CD14-positive monocyte (primary cell): ENCODE measurements at regions of chr19 and their contacts with region 1.

Region 1: GRCh38 chr19:2096480-2097329 is at the start of gene IZUMO4:
- DNase-seq: peak; percentile 97 to 98 (median 98)
- H3K4me3 ChIP-seq: peak within 1 kb of the TSS; percentile 49 to 99 (median 95)
- H3K4me3 Mint-ChIP-seq: peak within 1 kb of the TSS; percentile 91 to 99
- H3K27ac ChIP-seq: peak within 1 kb of the TSS; percentile 96 to 98
- H3K27ac Mint-ChIP-seq: peak within 1 kb of the TSS; percentile 100
- H3K4me1 ChIP-seq: peaks cover 42 to 49% of the 10 kb centered on the region in 2 donors
- H3K4me1 Mint-ChIP-seq: peaks cover 40% of the 10 kb centered on the region
- H3K27me3 ChIP-seq: no peaks in the 10 kb centered on the region
- H3K27me3 Mint-ChIP-seq: peaks cover 0 to 4% (median 0%) of the 10 kb centered on the region in 3 donors
- CTCF ChIP-seq: peak; percentile 41
- polyA plus RNA-seq, gene IZUMO4: 0.41 to 17.5 (median 0.80) TPM

Region 2: DNA sequence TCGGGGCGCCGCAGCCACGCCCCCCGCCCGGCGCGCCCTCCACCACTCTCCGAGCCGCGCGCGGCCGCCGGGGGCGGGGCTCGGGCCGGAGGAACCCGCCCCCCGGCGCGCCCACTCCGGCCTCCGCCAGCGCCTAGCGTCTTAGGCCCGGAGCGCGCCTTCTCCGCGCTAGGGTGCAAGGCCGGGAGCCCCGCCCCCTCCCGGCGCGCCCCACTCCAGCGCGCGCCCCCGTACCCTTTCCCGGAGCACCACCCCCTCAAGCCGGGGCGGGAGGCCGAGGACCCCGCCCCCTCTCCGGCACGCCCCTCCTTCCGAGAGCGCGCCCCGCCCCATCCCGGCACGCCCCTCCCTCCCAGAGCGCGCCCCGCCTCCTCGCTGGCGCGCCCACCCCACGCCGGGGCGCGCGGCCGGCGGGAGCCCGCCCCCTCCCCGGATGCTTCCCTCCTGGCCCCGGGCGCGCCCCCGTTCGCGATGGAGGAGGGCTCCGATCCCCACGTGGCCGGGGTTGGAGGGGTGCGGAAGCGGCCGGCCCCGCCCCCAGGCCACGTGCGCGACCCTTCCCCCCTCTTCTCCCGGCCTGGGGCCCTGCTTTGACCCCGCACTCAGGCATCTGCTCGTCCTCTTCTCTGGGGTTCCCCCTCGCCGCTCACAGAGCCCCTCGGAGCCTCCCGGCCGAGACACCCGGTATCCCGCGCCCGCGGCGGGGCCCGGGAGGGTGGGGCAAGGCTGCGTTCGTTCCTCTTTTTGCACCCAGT is 232.8 kb before region 1 on chr19:
- intact Hi-C with region 1: loop called in 1 of 2 experiments (anchors 2 kb)
- DNase-seq: peak; percentile 84 to 92 (median 90)
- H3K4me3 ChIP-seq: peak overlapping the region; percentile 67 to 93 (median 93)
- H3K4me3 Mint-ChIP-seq: peak overlapping the region; percentile 80 to 81
- H3K27ac ChIP-seq: peak overlapping the region; percentile 92 to 97
- H3K27ac Mint-ChIP-seq: peak overlapping the region; percentile 54 to 95 (median 92)
- H3K4me1 ChIP-seq: peaks cover 45 to 47% of the 10 kb centered on the region in 2 donors
- H3K4me1 Mint-ChIP-seq: peaks cover 39% of the 10 kb centered on the region
- H3K27me3 ChIP-seq: no peaks in the 10 kb centered on the region
- H3K27me3 Mint-ChIP-seq: peaks cover 0 to 4% (median 2%) of the 10 kb centered on the region in 3 donors
- CTCF ChIP-seq: no peak

Region 3: DNA sequence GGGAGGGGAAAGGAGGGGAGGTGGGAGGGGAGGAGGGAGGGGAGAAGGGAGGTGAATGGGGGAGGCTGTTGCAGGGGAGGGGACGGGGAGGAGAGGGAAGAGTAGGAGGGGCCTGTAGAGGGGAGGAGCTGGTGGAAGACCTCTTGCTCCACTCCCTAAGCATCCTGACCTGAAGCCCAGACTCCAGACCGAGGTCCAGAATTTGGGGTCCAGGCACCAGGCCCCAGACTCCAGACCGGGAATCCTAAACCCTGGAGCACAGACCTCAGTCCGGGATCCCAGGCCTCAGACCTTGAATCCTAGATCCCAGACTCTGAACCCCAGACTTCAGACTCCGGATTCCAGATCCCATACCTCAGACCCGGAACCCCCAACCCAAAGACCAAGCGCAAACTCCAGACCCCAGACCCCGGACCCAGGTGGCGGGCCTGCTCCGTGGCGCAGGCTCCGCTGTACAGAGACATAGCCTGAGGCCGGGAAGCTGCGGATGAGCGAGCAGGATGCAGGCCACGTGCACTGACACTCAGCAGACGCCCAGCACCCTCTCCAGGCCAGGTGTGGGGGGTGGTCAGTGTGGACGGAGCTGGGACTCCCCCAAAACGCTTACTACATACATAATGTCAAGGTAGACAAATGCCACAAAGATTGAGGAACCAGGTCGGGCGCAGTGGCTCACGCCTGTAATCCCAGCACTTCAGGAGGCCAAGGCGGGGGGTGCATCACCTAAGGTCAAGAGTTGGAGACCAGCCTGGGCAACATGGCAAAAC is 80.5 kb before region 1 on chr19:
- intact Hi-C with region 1: loop called in 1 of 2 experiments (anchors 2 kb)
- DNase-seq: peak; percentile 12 to 46 (median 36)
- H3K4me3 ChIP-seq: peak overlapping the region in 1 of 3 experiments; percentile 55
- H3K4me3 Mint-ChIP-seq: peak overlapping the region; percentile 46 to 48
- H3K27ac ChIP-seq: no peak overlapping the region
- H3K27ac Mint-ChIP-seq: peak overlapping the region in 2 of 7 donors; percentile 66 to 76
- H3K4me1 ChIP-seq: peaks cover 15 to 22% of the 10 kb centered on the region in 2 donors
- H3K4me1 Mint-ChIP-seq: peaks cover 18% of the 10 kb centered on the region
- H3K27me3 ChIP-seq: no peaks in the 10 kb centered on the region
- H3K27me3 Mint-ChIP-seq: peaks cover 0 to 3% (median 0%) of the 10 kb centered on the region in 3 donors
- CTCF ChIP-seq: no peak

Region 4: DNA sequence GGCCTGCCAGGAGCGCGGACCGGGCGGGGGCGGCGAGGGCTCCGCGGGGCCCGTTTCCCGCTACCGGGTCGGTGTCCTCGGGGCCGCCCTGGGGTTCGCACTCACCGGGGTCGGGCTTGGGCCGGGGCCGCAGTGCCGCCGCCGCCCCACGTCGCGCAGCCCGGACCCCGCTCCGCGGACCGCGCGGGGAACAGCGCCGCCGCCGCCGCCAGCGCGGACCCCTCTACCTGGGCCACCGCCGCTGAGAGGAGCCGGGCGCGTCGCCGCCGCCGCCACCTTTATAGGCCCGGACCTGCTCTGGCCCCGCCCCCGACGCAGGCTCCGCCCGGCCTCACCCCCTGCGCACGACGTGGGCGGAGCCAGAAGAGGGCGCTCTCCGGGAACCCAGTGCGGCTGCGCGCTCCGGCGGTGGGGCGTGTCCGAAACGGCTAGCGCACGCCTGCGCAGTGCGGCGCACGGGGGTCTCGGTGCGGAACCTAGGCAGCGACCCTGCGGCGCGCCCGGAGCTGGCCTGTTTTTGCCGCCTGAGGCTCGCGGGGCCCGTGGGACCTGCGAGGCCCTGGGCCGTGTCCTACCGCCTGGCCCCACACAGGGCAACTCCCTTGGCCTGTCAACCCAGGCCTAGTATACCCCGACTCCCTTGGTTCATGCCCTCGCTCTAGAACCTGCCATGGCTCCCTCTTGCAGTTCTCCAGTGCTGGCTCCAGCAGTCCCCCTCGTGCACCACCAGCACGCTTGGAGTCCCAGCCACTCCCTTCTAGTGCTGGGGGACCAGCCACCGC is 45.5 kb before region 1 on chr19 and contains the start of gene MKNK2:
- intact Hi-C with region 1: loop called in 1 of 2 experiments (anchors 2 kb)
- DNase-seq: peak; percentile 82 to 90 (median 82)
- H3K4me3 ChIP-seq: peak within 1 kb of the TSS; percentile 90 to 100 (median 97)
- H3K4me3 Mint-ChIP-seq: peak within 1 kb of the TSS; percentile 84 to 92
- H3K27ac ChIP-seq: peak within 1 kb of the TSS; percentile 82 to 95
- H3K27ac Mint-ChIP-seq: peak within 1 kb of the TSS; percentile 88 to 95 (median 94)
- H3K4me1 ChIP-seq: peaks cover 37 to 48% of the 10 kb centered on the region in 2 donors
- H3K4me1 Mint-ChIP-seq: peaks cover 35% of the 10 kb centered on the region
- H3K27me3 ChIP-seq: no peaks in the 10 kb centered on the region
- H3K27me3 Mint-ChIP-seq: peaks cover 0 to 3% (median 2%) of the 10 kb centered on the region in 3 donors
- CTCF ChIP-seq: peak; percentile 56
- polyA plus RNA-seq, gene MKNK2: 16.9 to 333 (median 21.8) TPM

Region 5: GRCh38 chr19:2061495-2062381 is 35.0 kb before region 1 on chr19:
- intact Hi-C with region 1: loop called (anchors 1 to 5 kb)
- DNase-seq: peak; percentile 98 to 99 (median 98)
- H3K4me3 ChIP-seq: peak overlapping the region; percentile 54 to 77 (median 74)
- H3K4me3 Mint-ChIP-seq: peak overlapping the region; percentile 82 to 90
- H3K27ac ChIP-seq: peak overlapping the region; percentile 63 to 92
- H3K27ac Mint-ChIP-seq: peak overlapping the region; percentile 88 to 98 (median 94)
- H3K4me1 ChIP-seq: peaks cover 36 to 40% of the 10 kb centered on the region in 2 donors
- H3K4me1 Mint-ChIP-seq: peaks cover 27% of the 10 kb centered on the region
- H3K27me3 ChIP-seq: no peaks in the 10 kb centered on the region
- H3K27me3 Mint-ChIP-seq: peaks cover 0 to 1% (median 0%) of the 10 kb centered on the region in 3 donors
- CTCF ChIP-seq: no peak

Region 6: DNA sequence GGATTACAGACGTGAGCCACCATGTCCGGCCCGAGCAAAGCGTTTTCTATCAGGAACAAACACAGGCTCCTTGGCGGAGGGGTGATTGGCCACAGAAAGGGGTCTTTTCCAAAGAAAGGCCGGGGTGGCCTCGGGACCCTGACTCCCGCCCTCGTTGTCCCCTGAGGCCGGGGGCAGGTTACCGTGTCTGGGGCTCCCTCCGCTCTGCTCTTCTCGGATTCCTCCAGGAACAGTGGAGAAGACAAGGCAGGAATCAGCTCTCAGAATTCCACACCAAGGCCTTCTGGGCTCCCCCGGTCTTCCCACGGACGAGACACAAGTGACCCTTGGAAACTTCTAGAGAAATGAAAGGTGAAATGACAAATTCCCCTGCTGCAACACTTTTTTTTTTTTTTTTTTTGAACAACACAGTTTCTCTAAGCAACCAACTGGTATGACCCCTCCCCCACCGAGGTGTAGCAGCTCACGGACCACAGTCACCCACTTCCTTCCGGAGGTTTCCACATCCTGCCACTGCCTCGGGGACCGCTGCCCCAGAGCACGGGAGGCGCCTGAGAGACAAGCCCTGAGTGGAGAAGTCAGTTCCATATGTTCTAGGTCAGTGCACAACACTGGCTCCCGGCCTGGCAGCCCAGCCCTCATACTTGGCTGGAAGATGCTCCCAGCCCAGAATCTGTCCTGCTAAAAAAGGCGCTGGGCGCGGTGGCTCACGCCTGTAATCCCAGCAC is 11.5 kb before region 1 on chr19:
- intact Hi-C with region 1: loop called in 1 of 2 experiments (anchors 1 kb)
- DNase-seq: peak; percentile 98 to 99 (median 98)
- H3K4me3 ChIP-seq: peak overlapping the region; percentile 65 to 99 (median 84)
- H3K4me3 Mint-ChIP-seq: peak overlapping the region; percentile 96 to 97
- H3K27ac ChIP-seq: peak overlapping the region; percentile 96 to 98
- H3K27ac Mint-ChIP-seq: peak overlapping the region; percentile 98 to 100 (median 100)
- H3K4me1 ChIP-seq: peaks cover 82 to 91% of the 10 kb centered on the region in 2 donors
- H3K4me1 Mint-ChIP-seq: peaks cover 76% of the 10 kb centered on the region
- H3K27me3 ChIP-seq: no peaks in the 10 kb centered on the region
- H3K27me3 Mint-ChIP-seq: peaks cover 0 to 5% (median 0%) of the 10 kb centered on the region in 3 donors
- CTCF ChIP-seq: no peak

Region 7: GRCh38 chr19:2151339-2152229 is 54.9 kb after region 1 on chr19 and contains the start of gene AP3D1:
- intact Hi-C with region 1: loop called (anchors 2 to 5 kb)
- DNase-seq: peak; percentile 99 to 100 (median 100)
- H3K4me3 ChIP-seq: peak within 1 kb of the TSS; percentile 84 to 99 (median 90)
- H3K4me3 Mint-ChIP-seq: peak within 1 kb of the TSS; percentile 86 to 90
- H3K27ac ChIP-seq: peak within 1 kb of the TSS; percentile 87 to 90
- H3K27ac Mint-ChIP-seq: peak within 1 kb of the TSS; percentile 91 to 97 (median 94)
- H3K4me1 ChIP-seq: peaks cover 40 to 41% of the 10 kb centered on the region in 2 donors
- H3K4me1 Mint-ChIP-seq: peaks cover 40% of the 10 kb centered on the region
- H3K27me3 ChIP-seq: no peaks in the 10 kb centered on the region
- H3K27me3 Mint-ChIP-seq: peaks cover 0 to 3% (median 0%) of the 10 kb centered on the region in 3 donors
- CTCF ChIP-seq: no peak
- polyA plus RNA-seq, gene AP3D1: 9.6 to 105 (median 12.4) TPM

Region 8: DNA sequence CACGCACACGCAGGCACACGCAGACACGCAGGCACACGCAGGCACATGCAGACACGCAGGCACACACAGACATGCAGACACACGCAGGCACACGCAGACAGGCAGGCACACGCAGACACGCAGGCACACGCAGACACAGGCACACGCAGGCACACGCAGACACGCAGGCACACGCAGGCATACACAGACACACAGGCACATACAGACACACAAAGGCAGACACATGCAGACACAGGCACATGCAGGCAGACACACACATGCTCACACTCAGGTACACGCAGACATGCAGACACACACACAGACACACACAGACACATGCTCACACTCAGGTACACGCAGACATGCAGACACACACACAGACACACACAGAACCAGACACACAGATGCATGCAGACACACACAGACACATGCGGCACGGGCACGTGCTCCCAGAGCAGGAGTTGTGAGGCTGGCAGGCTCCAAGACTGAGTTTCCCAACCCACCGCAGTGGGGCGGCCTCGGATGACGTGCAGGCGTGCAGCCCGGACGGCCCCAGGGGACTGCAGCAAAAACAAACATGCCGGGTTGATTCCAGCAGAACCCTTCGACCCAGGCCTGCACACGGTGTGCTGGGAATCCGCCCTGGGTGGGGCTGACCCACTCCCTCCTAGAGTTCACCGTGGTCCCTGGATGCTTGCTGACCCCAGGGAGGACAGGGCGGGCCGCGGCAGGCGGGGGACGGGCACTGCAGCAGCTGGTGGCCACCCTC is 479.2 kb after region 1 on chr19:
- intact Hi-C with region 1: no loop called
- DNase-seq: no peak
- H3K4me3 ChIP-seq: no peak overlapping the region
- H3K4me3 Mint-ChIP-seq: no peak overlapping the region
- H3K27ac ChIP-seq: no peak overlapping the region
- H3K27ac Mint-ChIP-seq: peak overlapping the region in 1 of 7 donors; percentile 21
- H3K4me1 ChIP-seq: peaks cover 12 to 14% of the 10 kb centered on the region in 2 donors
- H3K4me1 Mint-ChIP-seq: peaks cover 16% of the 10 kb centered on the region
- H3K27me3 ChIP-seq: peaks cover 0 to 9% of the 10 kb centered on the region in 2 donors
- H3K27me3 Mint-ChIP-seq: peaks cover 5 to 19% (median 9%) of the 10 kb centered on the region in 3 donors
- CTCF ChIP-seq: no peak